Breast epithelium (tissue), 4 donors: ENCODE measurements at regions of chr5 and their contacts with region 1.

Region 1: GRCh38 chr5:134519989-134520388 is 5.5 kb upstream of the JADE2 start:
- DNase-seq: no peak
- H3K4me3 ChIP-seq: no peak overlapping the region
- H3K27ac ChIP-seq: no peak overlapping the region
- H3K4me1 ChIP-seq: no peaks in the 10 kb centered on the region
- H3K27me3 ChIP-seq: no peaks in the 10 kb centered on the region
- CTCF ChIP-seq: no peak
- POLR2A ChIP-seq: no peak

Region 2: DNA sequence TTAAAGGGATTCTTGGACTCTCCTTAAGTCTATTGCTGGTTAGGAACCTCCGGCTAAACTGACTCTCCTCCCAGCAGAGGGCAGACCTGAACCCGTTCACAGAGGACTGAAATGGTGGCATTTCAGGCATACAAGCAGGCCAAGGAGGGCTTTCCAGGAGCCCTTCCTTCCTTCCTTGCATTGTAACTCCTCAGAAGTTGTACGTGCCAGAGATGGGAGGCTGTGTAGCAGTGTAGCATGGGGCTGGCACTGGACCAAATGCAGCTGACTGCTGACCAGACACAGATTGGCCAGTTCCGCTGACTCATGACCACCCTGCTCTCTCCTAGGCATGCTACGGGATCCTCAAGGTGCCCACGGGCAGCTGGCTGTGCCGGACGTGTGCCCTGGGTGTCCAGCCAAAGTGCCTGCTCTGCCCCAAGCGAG is 41.9 kb after region 1 on chr5:
- intact Hi-C with region 1: loop called (anchors 1 kb)
- DNase-seq: no peak
- H3K4me3 ChIP-seq: no peak overlapping the region
- H3K27ac ChIP-seq: peak overlapping the region in 1 of 2 donors; percentile 33
- H3K4me1 ChIP-seq: no peaks in the 10 kb centered on the region
- H3K27me3 ChIP-seq: no peaks in the 10 kb centered on the region
- CTCF ChIP-seq: no peak
- POLR2A ChIP-seq: no peak